Uterus (tissue), 4 donors: ENCODE measurements at regions of chr11 and their contacts with region 1.

Region 1: DNA sequence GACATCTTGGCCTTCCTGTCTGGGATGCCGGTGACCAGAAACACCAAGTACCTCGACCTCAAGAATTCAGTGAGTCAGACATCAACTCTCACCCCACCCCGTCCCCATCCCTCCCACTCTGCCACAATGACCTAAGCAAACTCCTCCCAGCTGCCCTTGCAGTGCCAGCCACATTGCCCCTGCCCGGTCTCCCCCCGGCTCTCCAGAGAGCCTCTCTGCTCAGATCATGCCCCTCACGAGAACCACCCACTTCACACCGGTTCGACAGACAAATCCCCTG is 23.6 kb upstream of the MYRF start:
- DNase-seq: no peak
- H3K4me3 ChIP-seq: no peak overlapping the region
- H3K27ac ChIP-seq: no peak overlapping the region
- H3K4me1 ChIP-seq: no peaks in the 10 kb centered on the region
- H3K27me3 ChIP-seq: no peaks in the 10 kb centered on the region
- CTCF ChIP-seq: no peak
- POLR2A ChIP-seq: no peak

Region 2: GRCh38 chr11:61679893-61680621 is 48.8 kb before region 1 on chr11 and contains the start of gene DAGLA:
- intact Hi-C with region 1: loop called (anchors 5 kb)
- DNase-seq: peak; percentile 52 to 79
- H3K4me3 ChIP-seq: peak within 1 kb of the TSS; percentile 36 to 44
- H3K27ac ChIP-seq: peak within 1 kb of the TSS; percentile 49 to 79
- H3K4me1 ChIP-seq: peaks cover 4 to 6% of the 10 kb centered on the region in 2 donors
- H3K27me3 ChIP-seq: no peaks in the 10 kb centered on the region
- CTCF ChIP-seq: peak; percentile 75 to 99 (median 99)
- POLR2A ChIP-seq: peak in 1 of 2 donors; percentile 26
- total RNA-seq, gene DAGLA: 0.29 to 5.4 (median 1.9) TPM